Ovary (tissue), 10 donors: ENCODE measurements at regions of chr2 and their contacts with region 1.

Region 1: GRCh38 chr2:27624943-27625342 is 3.9 kb downstream of the CCDC121 start:
- DNase-seq: no peak
- H3K4me3 ChIP-seq: no peak overlapping the region
- H3K27ac ChIP-seq: no peak overlapping the region
- H3K4me1 ChIP-seq: peaks cover 8% of the 10 kb centered on the region
- H3K27me3 ChIP-seq: no peaks in the 10 kb centered on the region
- CTCF ChIP-seq: no peak
- EP300 ChIP-seq: no peak
- POLR2A ChIP-seq: no peak

Region 2: GRCh38 chr2:27606611-27607010 is 18.3 kb before region 1 on chr2:
- intact Hi-C with region 1: loop called in 1 of 4 experiments (anchors 2 kb)
- DNase-seq: no peak
- H3K4me3 ChIP-seq: no peak overlapping the region
- H3K27ac ChIP-seq: no peak overlapping the region
- H3K4me1 ChIP-seq: no peaks in the 10 kb centered on the region
- H3K27me3 ChIP-seq: no peaks in the 10 kb centered on the region
- CTCF ChIP-seq: no peak
- EP300 ChIP-seq: no peak
- POLR2A ChIP-seq: no peak